Activated T-helper 1 cell treated with anti-CD3 and anti-CD28 coated beads, Interleukin-12 subunit alpha, Interleukin-12 subunit beta, Interleukin-2, Interleukin-4 antibody, amounts not matched to agents 30 ng/mL and 10 ng/mL and 1 ng/mL, durations not matched to agents 14 hours and 24 hours and 36 hours (primary cell): ENCODE measurements at regions of chr14 and their contacts with region 1.

Region 1: GRCh38 chr14:88562831-88563686 is at the start of gene ZC3H14:
- DNase-seq: peak; percentile 87
- H3K4me3 Mint-ChIP-seq: peak within 1 kb of the TSS; percentile 91
- H3K27ac Mint-ChIP-seq: peak within 1 kb of the TSS; percentile 91
- H3K4me1 Mint-ChIP-seq: peaks cover 29% of the 10 kb centered on the region
- H3K27me3 Mint-ChIP-seq: peaks cover 22% of the 10 kb centered on the region
- total RNA-seq, gene ZC3H14: 61.0 and 65.5 TPM in 2 replicates

Region 2: GRCh38 chr14:87944987-87945604 is 618.0 kb before region 1 on chr14:
- intact Hi-C with region 1: loop called (anchors 10 kb)
- DNase-seq: no peak
- H3K4me3 Mint-ChIP-seq: no peak overlapping the region
- H3K27ac Mint-ChIP-seq: no peak overlapping the region
- H3K4me1 Mint-ChIP-seq: no peaks in the 10 kb centered on the region
- H3K27me3 Mint-ChIP-seq: no peaks in the 10 kb centered on the region

Region 3: GRCh38 chr14:88005978-88006851 is 556.8 kb before region 1 on chr14:
- intact Hi-C with region 1: loop called (anchors 5 kb)
- DNase-seq: peak; percentile 68
- H3K4me3 Mint-ChIP-seq: peak overlapping the region; percentile 93
- H3K27ac Mint-ChIP-seq: peak overlapping the region; percentile 94
- H3K4me1 Mint-ChIP-seq: peaks cover 70% of the 10 kb centered on the region
- H3K27me3 Mint-ChIP-seq: no peaks in the 10 kb centered on the region

Region 4: GRCh38 chr14:88452231-88452630 is 110.8 kb before region 1 on chr14:
- intact Hi-C with region 1: no loop called
- DNase-seq: no peak
- H3K4me3 Mint-ChIP-seq: no peak overlapping the region
- H3K27ac Mint-ChIP-seq: no peak overlapping the region
- H3K4me1 Mint-ChIP-seq: no peaks in the 10 kb centered on the region
- H3K27me3 Mint-ChIP-seq: no peaks in the 10 kb centered on the region

Region 5: DNA sequence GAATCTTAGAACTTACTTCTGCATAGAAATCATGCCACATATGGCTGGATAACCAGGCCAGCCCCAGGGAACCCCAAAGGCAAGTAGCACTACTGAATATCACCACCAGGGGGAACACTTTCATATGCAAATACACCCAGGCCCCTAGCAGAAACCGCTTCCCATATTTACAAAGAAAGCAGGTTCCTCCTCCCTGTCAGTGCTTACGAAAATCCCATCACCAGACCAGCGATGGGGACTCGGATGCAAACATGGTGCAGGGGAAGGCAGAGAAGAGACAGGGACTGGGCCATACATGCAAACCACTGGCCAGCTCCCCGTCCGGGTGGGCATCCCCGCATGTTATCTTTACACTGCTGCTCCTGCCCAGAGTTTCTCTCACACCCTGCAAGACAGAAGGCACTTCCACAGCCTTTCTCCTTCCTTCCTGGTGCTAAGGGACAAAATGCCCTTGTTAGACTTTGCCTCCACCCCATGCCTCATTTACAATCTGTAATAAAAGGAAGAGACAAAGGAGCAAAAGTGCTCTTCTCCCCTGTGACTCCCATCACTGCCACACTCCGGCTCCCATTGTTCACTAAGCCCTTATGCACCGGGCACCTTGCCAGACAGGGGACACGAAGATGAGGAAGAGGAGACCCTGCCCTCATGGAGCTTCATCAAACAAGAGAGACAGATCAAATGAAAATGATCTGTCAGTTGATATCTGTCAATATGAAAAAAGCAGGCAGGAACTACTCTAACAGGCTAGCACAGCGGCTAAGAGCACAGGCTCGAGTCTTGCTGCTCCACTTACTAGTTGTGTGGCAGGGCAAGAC is 70.6 kb before region 1 on chr14:
- intact Hi-C with region 1: loop called (anchors 1 kb)
- DNase-seq: peak; percentile 48
- H3K4me3 Mint-ChIP-seq: no peak overlapping the region
- H3K27ac Mint-ChIP-seq: no peak overlapping the region
- H3K4me1 Mint-ChIP-seq: peaks cover 4% of the 10 kb centered on the region
- H3K27me3 Mint-ChIP-seq: peaks cover 8% of the 10 kb centered on the region

Region 6: GRCh38 chr14:88599761-88600439 is 36.8 kb after region 1 on chr14:
- intact Hi-C with region 1: loop called (anchors 1 kb)
- DNase-seq: peak; percentile 6
- H3K4me3 Mint-ChIP-seq: peak overlapping the region; percentile 64
- H3K27ac Mint-ChIP-seq: peak overlapping the region; percentile 91
- H3K4me1 Mint-ChIP-seq: peaks cover 48% of the 10 kb centered on the region
- H3K27me3 Mint-ChIP-seq: no peaks in the 10 kb centered on the region

Region 7: DNA sequence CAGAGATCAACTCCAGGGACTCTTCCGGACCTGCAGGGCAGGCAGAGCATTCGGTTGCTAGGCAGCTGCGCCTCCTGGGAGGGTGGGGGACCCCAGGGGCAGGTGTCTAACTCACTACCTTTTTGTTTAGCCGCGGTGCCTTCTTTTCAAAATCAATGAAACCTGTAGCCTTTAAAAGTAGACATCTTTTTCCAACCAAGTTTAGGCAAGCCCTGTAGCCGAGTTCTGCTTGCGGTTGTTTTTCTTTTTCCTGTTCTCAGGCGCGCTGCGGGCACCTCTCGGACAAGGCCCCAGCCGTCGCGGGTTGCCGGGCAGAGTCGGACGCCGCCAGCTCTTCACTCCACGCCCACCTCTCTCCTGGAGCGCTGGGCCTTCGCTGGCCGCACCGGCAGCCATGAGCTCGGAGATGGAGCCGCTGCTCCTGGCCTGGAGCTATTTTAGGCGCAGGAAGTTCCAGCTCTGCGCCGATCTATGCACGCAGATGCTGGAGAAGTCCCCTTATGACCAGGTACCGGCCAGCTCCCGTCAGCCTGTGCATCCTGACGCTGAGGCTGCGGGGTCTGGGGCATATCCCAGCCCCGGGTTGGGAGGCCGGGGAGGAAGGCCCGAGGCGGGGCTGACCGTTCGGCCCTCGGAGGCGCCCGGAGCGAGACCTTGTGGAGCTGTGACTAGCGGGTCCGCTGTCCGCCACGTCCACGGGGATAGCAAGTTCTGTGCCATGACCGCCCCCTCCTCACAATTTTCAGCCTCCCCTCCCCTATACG is 261.4 kb after region 1 on chr14 and contains the start of gene TTC8:
- intact Hi-C with region 1: loop called (anchors 2 kb)
- DNase-seq: peak; percentile 74
- H3K4me3 Mint-ChIP-seq: peak within 1 kb of the TSS; percentile 84
- H3K27ac Mint-ChIP-seq: peak within 1 kb of the TSS; percentile 93
- H3K4me1 Mint-ChIP-seq: peaks cover 14% of the 10 kb centered on the region
- H3K27me3 Mint-ChIP-seq: peaks cover 15% of the 10 kb centered on the region
- total RNA-seq, gene TTC8: 3.5 and 4.6 TPM in 2 replicates